ENCODE measurements at regions of chr12 and their contacts with region 1.

Region 1: GRCh38 chr12:54853995-54854566 is at the start of gene MUCL1:
- DNase-seq: peak; percentile 2
- H3K4me3 ChIP-seq: no peak within 1 kb of the TSS
- H3K27me3 ChIP-seq: no peaks in the 10 kb centered on the region
- CTCF ChIP-seq: peak; percentile 88
- polyA plus RNA-seq, gene MUCL1: not detected in 2 replicates

Region 2: DNA sequence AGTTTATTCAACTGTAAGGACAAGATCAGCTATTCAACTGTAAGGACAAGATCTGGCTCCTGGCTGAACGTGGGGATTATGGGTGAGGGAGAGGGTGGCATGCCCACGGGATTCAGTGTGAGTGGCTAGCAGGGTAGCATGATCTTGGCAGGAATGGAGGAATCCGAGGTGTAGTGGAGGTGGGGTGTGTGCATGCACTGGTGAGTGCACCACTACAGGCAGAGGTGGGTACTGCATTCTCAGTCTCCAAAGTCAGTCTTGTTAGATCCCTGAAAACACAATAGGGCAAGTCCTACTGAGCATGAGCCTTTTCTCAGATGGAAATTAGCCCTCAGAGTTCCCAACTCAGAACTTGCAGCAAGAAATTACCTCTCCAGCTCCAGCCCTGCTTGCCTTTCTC is 173.7 kb before region 1 on chr12:
- CTCF ChIA-PET with region 1: no interaction called
- POLR2A ChIA-PET with region 1: no interaction called
- DNase-seq: no peak
- H3K4me3 ChIP-seq: no peak overlapping the region
- H3K27me3 ChIP-seq: no peaks in the 10 kb centered on the region
- CTCF ChIP-seq: peak; percentile 40

Region 3: GRCh38 chr12:54831631-54832030 is 22.4 kb before region 1 on chr12:
- CTCF ChIA-PET with region 1: no interaction called
- POLR2A ChIA-PET with region 1: no interaction called
- DNase-seq: no peak
- H3K4me3 ChIP-seq: no peak overlapping the region
- H3K27me3 ChIP-seq: no peaks in the 10 kb centered on the region
- CTCF ChIP-seq: no peak

Region 4: GRCh38 chr12:54958048-54958658 is 104.1 kb after region 1 on chr12:
- CTCF ChIA-PET with region 1: interaction called, 20 read pairs
- POLR2A ChIA-PET with region 1: no interaction called
- DNase-seq: peak; percentile 9
- H3K4me3 ChIP-seq: no peak overlapping the region
- H3K27me3 ChIP-seq: no peaks in the 10 kb centered on the region
- CTCF ChIP-seq: peak; percentile 63

Measured in BJ (cell line).